ENCODE measurements at regions of chr3 and their contacts with region 1.

Region 1: GRCh38 chr3:118884748-118885206 is 149.9 kb downstream of the IGSF11 start:
- DNase-seq: peak; percentile 84
- H3K4me3 Mint-ChIP-seq: no peak overlapping the region
- H3K27ac Mint-ChIP-seq: no peak overlapping the region
- H3K4me1 Mint-ChIP-seq: no peaks in the 10 kb centered on the region
- H3K27me3 Mint-ChIP-seq: peaks cover 7% of the 10 kb centered on the region

Region 2: GRCh38 chr3:118799303-118799702 is 85.5 kb before region 1 on chr3:
- CTCF ChIA-PET with region 1: no interaction called
- POLR2A ChIA-PET with region 1: no interaction called
- intact Hi-C with region 1: no loop called
- DNase-seq: no peak
- H3K4me3 Mint-ChIP-seq: no peak overlapping the region
- H3K27ac Mint-ChIP-seq: no peak overlapping the region
- H3K4me1 Mint-ChIP-seq: no peaks in the 10 kb centered on the region
- H3K27me3 Mint-ChIP-seq: peaks cover 1% of the 10 kb centered on the region

Region 3: DNA sequence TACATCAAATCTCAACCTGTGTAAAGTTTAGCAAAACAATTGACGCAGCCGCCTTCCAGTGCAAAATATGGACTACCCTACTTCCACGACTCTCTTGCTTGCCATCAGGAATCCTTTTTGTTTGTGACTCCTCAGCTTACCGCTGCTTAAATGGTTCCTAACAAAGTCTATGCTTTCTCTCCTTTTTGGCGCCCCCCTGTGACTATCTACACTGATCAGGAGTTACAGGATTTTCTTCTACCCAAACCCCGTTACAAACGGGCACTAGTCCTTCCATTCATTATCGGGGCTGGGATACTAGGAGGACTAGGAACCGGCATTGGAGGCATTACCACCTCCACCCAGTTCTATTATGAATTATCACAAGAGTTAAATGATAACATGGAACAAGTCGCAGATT is 34.1 kb before region 1 on chr3:
- CTCF ChIA-PET with region 1: interaction called, 13 read pairs
- POLR2A ChIA-PET with region 1: no interaction called
- intact Hi-C with region 1: no loop called
- DNase-seq: no peak
- H3K4me3 Mint-ChIP-seq: no peak overlapping the region
- H3K27ac Mint-ChIP-seq: no peak overlapping the region
- H3K4me1 Mint-ChIP-seq: peaks cover 8% of the 10 kb centered on the region
- H3K27me3 Mint-ChIP-seq: no peaks in the 10 kb centered on the region

Region 4: GRCh38 chr3:118949113-118949760 is 64.5 kb after region 1 on chr3:
- CTCF ChIA-PET with region 1: interaction called, 8 read pairs
- POLR2A ChIA-PET with region 1: no interaction called
- intact Hi-C with region 1: loop called (anchors 5 kb)
- DNase-seq: no peak
- H3K4me3 Mint-ChIP-seq: no peak overlapping the region
- H3K27ac Mint-ChIP-seq: peak overlapping the region; percentile 57
- H3K4me1 Mint-ChIP-seq: peaks cover 28% of the 10 kb centered on the region
- H3K27me3 Mint-ChIP-seq: no peaks in the 10 kb centered on the region

Region 5: GRCh38 chr3:119034256-119035013 is 149.7 kb after region 1 on chr3 and contains the start of gene IGSF11:
- CTCF ChIA-PET with region 1: interaction called, 363 read pairs
- POLR2A ChIA-PET with region 1: interaction called, 4 read pairs
- intact Hi-C with region 1: loop called (anchors 1 kb)
- DNase-seq: peak; percentile 71
- H3K4me3 Mint-ChIP-seq: peak within 1 kb of the TSS; percentile 80
- H3K27ac Mint-ChIP-seq: no peak within 1 kb of the TSS
- H3K4me1 Mint-ChIP-seq: peaks cover 4% of the 10 kb centered on the region
- H3K27me3 Mint-ChIP-seq: peaks cover 38% of the 10 kb centered on the region
- total RNA-seq, gene IGSF11: 0.14 to 0.15 TPM

Region 6: GRCh38 chr3:119062892-119063291 is 178.1 kb after region 1 on chr3:
- CTCF ChIA-PET with region 1: interaction called, 10 read pairs
- POLR2A ChIA-PET with region 1: no interaction called
- intact Hi-C with region 1: no loop called
- DNase-seq: no peak
- H3K4me3 Mint-ChIP-seq: no peak overlapping the region
- H3K27ac Mint-ChIP-seq: no peak overlapping the region
- H3K4me1 Mint-ChIP-seq: no peaks in the 10 kb centered on the region
- H3K27me3 Mint-ChIP-seq: no peaks in the 10 kb centered on the region

Region 7: GRCh38 chr3:119098619-119099222 is 213.9 kb after region 1 on chr3:
- CTCF ChIA-PET with region 1: interaction called, 366 read pairs
- POLR2A ChIA-PET with region 1: interaction called, 3 read pairs
- intact Hi-C with region 1: loop called (anchors 1 kb)
- DNase-seq: no peak
- H3K4me3 Mint-ChIP-seq: no peak overlapping the region
- H3K27ac Mint-ChIP-seq: no peak overlapping the region
- H3K4me1 Mint-ChIP-seq: no peaks in the 10 kb centered on the region
- H3K27me3 Mint-ChIP-seq: no peaks in the 10 kb centered on the region

Region 8: DNA sequence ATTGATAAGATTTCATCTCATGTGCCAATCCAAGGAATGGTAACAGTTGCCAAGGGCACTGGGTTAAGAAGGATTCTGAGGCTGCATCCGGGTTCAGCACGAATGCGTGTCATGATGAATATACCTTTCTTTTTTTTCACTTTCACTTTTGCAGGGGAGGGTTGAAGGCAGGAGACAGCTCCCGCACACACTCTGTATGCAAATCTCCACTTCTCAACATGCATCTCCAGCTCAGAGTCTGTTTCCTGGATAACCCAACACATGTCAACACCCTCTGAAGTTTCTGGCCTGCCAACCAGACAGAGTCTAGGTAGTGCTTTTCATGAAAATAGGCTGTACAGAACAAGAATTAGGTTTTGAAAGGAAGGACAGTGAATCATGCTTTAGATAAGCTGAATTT is 334.3 kb after region 1 on chr3:
- CTCF ChIA-PET with region 1: interaction called, 14 read pairs
- POLR2A ChIA-PET with region 1: no interaction called
- intact Hi-C with region 1: no loop called
- DNase-seq: peak; percentile 58
- H3K4me3 Mint-ChIP-seq: peak overlapping the region; percentile 33
- H3K27ac Mint-ChIP-seq: peak overlapping the region; percentile 77
- H3K4me1 Mint-ChIP-seq: peaks cover 34% of the 10 kb centered on the region
- H3K27me3 Mint-ChIP-seq: no peaks in the 10 kb centered on the region